Calu3 (cell line): ENCODE measurements at regions of chr1 and their contacts with region 1.

Region 1: DNA sequence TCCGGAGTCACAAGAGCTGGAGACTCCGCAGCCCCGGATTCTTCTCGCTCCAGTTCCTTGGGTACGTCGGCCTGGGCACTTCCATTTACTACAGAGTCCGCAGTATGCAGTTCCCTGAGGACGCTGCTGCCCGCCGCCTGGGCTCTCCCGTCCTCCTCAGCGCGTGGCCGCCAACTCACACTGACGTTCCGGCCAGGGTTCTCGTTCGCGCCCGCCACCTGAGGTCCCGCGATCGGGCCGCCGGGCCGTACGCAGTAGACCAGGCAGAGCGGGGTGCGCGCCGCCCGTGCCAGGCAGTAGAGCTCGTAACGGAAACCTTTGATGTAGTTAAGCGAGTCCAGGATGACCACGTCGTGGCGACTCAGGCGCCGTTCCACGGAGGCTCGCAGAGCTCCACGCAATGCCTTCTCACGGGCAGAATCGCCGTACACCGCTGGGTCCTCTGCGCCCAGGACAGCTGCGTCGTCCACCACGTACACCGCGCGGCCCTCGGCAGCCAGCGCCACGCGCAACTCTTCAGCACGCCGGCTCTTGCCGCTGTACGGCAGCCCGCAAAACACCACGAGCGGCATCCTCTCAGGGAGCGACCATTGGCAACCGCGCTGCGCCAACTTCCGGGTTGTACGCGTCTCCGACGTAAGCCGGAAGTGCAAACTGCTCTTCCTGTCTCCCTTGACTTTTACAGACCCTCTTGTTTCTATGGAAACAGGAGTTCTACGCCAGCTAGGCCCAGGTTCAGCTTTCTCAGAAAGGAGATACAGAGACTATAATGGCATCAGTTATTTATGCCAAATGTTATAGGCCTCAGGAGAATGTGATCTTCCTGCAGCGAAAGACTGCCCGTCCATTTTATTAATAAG is at the start of gene KTI12:
- DNase-seq: peak; percentile 73
- H3K4me3 Mint-ChIP-seq: peak within 1 kb of the TSS; percentile 95
- H3K27ac Mint-ChIP-seq: peak within 1 kb of the TSS; percentile 93
- H3K4me1 Mint-ChIP-seq: peaks cover 30% of the 10 kb centered on the region
- H3K27me3 Mint-ChIP-seq: no peaks in the 10 kb centered on the region
- CTCF ChIP-seq: no peak
- total RNA-seq, gene KTI12: 9.1 and 11.8 TPM in 2 replicates

Region 2: DNA sequence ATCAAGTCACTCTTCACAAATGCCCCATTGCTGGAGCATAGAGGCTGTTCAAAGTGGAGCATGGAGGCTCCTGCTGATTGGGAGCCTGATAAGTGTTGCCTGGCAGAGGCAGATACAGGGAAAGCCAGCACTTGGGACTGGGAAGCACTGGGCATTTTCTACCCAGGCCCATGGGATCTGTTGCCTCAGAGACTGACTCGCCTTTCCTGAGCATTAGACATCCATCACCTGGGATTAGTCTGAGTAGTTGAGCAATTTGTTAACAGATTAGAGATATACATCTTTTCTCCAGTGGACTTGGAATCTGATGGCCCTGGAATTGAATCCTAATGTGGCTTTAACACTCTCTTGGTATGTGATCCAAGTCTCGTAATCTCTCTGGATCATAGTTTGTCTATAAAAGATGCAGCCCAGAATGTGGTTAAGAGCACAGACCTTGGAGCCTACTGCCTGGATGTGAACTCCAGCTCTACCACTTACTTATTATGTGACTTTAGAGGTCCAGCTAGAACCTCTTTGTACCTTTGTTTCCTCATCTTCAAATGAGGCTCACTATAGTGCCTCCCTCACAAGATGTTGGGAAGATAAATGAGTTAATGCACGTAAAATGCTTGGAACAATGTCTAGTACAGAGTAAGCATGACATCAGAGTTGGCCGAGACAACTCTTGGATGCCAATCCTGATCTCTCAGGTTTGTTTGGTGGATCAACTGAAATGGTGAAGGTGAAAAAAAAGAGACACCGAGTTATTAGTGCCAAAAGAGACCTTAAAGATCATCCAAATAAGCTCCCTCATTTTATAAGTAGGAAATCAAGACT is 116.6 kb before region 1 on chr1:
- CTCF ChIA-PET with region 1: no interaction called
- intact Hi-C with region 1: no loop called
- DNase-seq: no peak
- H3K4me3 Mint-ChIP-seq: no peak overlapping the region
- H3K27ac Mint-ChIP-seq: no peak overlapping the region
- H3K4me1 Mint-ChIP-seq: no peaks in the 10 kb centered on the region
- H3K27me3 Mint-ChIP-seq: peaks cover 86% of the 10 kb centered on the region
- CTCF ChIP-seq: no peak

Region 3: DNA sequence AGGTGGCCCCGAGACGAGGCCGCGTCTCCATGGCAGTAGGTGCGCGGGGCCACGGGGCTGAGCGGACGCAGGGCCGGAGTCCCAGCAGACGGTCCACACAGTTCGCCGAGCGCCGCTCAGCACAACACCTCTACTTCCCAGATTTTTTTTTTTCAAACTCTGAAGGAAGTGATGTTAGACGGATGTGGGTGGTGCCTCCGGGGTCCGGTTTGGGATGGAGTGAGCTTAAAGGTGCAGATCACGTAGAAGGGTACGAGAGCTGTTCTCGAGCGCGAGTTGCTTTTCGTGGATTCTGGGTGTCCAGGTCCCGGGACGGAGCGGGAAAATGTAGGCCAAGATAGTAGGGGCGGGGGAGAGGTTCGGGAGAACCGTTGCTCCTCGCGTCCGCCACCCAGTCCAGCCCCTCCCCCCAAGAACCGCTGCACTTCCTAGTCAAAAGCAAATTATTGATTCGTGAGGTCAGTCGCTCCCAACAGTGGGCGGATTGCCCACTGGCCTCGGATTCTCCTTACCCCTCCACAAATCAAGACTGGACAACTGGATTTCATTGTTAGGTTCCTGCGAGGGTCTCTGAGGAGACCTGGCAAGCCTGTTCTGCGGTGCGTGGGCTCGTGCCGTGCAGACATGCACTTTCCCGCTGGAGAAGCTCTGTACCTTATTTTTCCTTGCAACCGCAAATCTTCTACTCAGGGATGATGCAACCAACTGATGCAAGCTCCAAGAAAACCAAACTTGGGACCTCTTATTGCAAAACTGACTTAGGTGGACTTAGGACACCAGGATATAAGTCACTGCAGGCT is 21.8 kb after region 1 on chr1 and contains the start of gene TXNDC12:
- CTCF ChIA-PET with region 1: interaction called, 3 read pairs
- intact Hi-C with region 1: loop called (anchors 1 kb)
- DNase-seq: peak; percentile 87
- H3K4me3 Mint-ChIP-seq: peak within 1 kb of the TSS; percentile 93
- H3K27ac Mint-ChIP-seq: peak within 1 kb of the TSS; percentile 83
- H3K4me1 Mint-ChIP-seq: peaks cover 40% of the 10 kb centered on the region
- H3K27me3 Mint-ChIP-seq: no peaks in the 10 kb centered on the region
- CTCF ChIP-seq: no peak
- total RNA-seq, gene TXNDC12: 51.6 and 68.9 TPM in 2 replicates

Region 4: GRCh38 chr1:52072291-52072690 is 38.9 kb after region 1 on chr1:
- CTCF ChIA-PET with region 1: interaction called, 11 read pairs
- intact Hi-C with region 1: no loop called
- DNase-seq: no peak
- H3K4me3 Mint-ChIP-seq: no peak overlapping the region
- H3K27ac Mint-ChIP-seq: no peak overlapping the region
- H3K4me1 Mint-ChIP-seq: peaks cover 7% of the 10 kb centered on the region
- H3K27me3 Mint-ChIP-seq: no peaks in the 10 kb centered on the region
- CTCF ChIP-seq: no peak